B cell (primary cell): ENCODE measurements at regions of chr19 and their contacts with region 1.

Region 1: GRCh38 chr19:48203732-48204628 is 33.5 kb downstream of the ZSWIM9 start:
- DNase-seq: peak; percentile 91
- ATAC-seq: peak; percentile 100
- H3K4me3 ChIP-seq: peak overlapping the region; percentile 55 to 89 (median 80)
- H3K4me3 Mint-ChIP-seq: no peak overlapping the region
- H3K27ac ChIP-seq: peak overlapping the region; percentile 60 to 76
- H3K27ac Mint-ChIP-seq: no peak overlapping the region
- H3K4me1 ChIP-seq: peaks cover 15 to 18% of the 10 kb centered on the region in 2 donors
- H3K4me1 Mint-ChIP-seq: peaks cover 15% of the 10 kb centered on the region
- H3K27me3 ChIP-seq: no peaks in the 10 kb centered on the region
- H3K27me3 Mint-ChIP-seq: no peaks in the 10 kb centered on the region
- CTCF ChIP-seq: no peak

Region 2: GRCh38 chr19:48170038-48170812 is 33.8 kb before region 1 on chr19 and contains the starts of genes LIG1 and ZSWIM9:
- CTCF ChIA-PET with region 1: interaction called, 3 read pairs
- POLR2A ChIA-PET with region 1: interaction called, 17 read pairs
- intact Hi-C with region 1: loop called (anchors 1 kb)
- DNase-seq: peak; percentile 97
- ATAC-seq: peak; percentile 80
- H3K4me3 ChIP-seq: peak within 1 kb of the TSS; percentile 41 to 99 (median 90)
- H3K4me3 Mint-ChIP-seq: peak within 1 kb of the TSS; percentile 96
- H3K27ac ChIP-seq: peak within 1 kb of the TSS; percentile 86 to 87
- H3K27ac Mint-ChIP-seq: peak within 1 kb of the TSS; percentile 98
- H3K4me1 ChIP-seq: peaks cover 10 to 15% of the 10 kb centered on the region in 2 donors
- H3K4me1 Mint-ChIP-seq: peaks cover 25% of the 10 kb centered on the region
- H3K27me3 ChIP-seq: no peaks in the 10 kb centered on the region
- H3K27me3 Mint-ChIP-seq: no peaks in the 10 kb centered on the region
- CTCF ChIP-seq: no peak
- total RNA-seq, gene LIG1: 111 and 116 TPM in 2 replicates
- total RNA-seq, gene ZSWIM9: 11.8 and 15.7 TPM in 2 replicates

Region 3: GRCh38 chr19:48190288-48190884 is 13.6 kb before region 1 on chr19:
- CTCF ChIA-PET with region 1: interaction called, 12 read pairs
- POLR2A ChIA-PET with region 1: interaction called, 11 read pairs
- intact Hi-C with region 1: no loop called
- DNase-seq: peak; percentile 53
- ATAC-seq: peak; percentile 72
- H3K4me3 ChIP-seq: no peak overlapping the region
- H3K4me3 Mint-ChIP-seq: no peak overlapping the region
- H3K27ac ChIP-seq: no peak overlapping the region
- H3K27ac Mint-ChIP-seq: no peak overlapping the region
- H3K4me1 ChIP-seq: peaks cover 17 to 19% of the 10 kb centered on the region in 2 donors
- H3K4me1 Mint-ChIP-seq: peaks cover 28% of the 10 kb centered on the region
- H3K27me3 ChIP-seq: no peaks in the 10 kb centered on the region
- H3K27me3 Mint-ChIP-seq: no peaks in the 10 kb centered on the region
- CTCF ChIP-seq: peak; percentile 34

Region 4: DNA sequence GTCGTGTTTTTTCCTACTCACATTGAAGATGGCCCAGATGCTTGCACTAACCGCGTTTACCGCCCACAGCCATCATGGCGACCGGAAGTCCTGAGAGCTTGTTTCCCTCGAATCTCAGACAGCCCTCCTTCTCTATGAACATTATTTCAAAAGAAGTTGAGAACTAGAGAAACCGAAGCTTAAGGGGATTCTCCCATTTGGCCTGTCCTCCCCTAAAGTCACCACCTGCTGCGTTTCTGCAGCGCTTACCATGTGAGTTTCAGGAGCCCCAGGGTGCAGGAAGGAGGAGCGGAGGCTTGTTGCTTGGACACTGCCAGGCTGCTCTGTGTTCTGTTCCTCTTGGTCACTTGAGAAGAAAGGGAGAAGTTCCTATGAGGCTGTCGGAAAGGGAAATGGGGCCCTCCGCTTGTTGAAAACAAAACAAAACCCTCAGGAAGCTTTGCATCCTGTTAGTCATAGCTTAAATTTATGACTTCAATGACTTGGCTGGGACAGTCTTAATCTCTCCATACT is 45.6 kb after region 1 on chr19:
- CTCF ChIA-PET with region 1: interaction called, 18 read pairs
- POLR2A ChIA-PET with region 1: interaction called, 6 read pairs
- intact Hi-C with region 1: loop called (anchors 5 kb)
- DNase-seq: peak; percentile 79
- ATAC-seq: peak; percentile 87
- H3K4me3 ChIP-seq: peak overlapping the region; percentile 48 to 85 (median 62)
- H3K4me3 Mint-ChIP-seq: peak overlapping the region; percentile 93
- H3K27ac ChIP-seq: peak overlapping the region; percentile 86 to 95
- H3K27ac Mint-ChIP-seq: peak overlapping the region; percentile 98
- H3K4me1 ChIP-seq: peaks cover 27 to 38% of the 10 kb centered on the region in 2 donors
- H3K4me1 Mint-ChIP-seq: peaks cover 59% of the 10 kb centered on the region
- H3K27me3 ChIP-seq: no peaks in the 10 kb centered on the region
- H3K27me3 Mint-ChIP-seq: no peaks in the 10 kb centered on the region
- CTCF ChIP-seq: no peak